WTC11 (cell line): ENCODE measurements at regions of chr2 and their contacts with region 1.

Region 1: GRCh38 chr2:71000780-71001591 is 6.3 kb upstream of the TEX261 start:
- DNase-seq: peak; percentile 77
- ATAC-seq: peak; percentile 72
- H3K4me3 Mint-ChIP-seq: peak overlapping the region; percentile 43
- H3K27ac Mint-ChIP-seq: no peak overlapping the region
- H3K4me1 Mint-ChIP-seq: peaks cover 18% of the 10 kb centered on the region
- H3K27me3 Mint-ChIP-seq: peaks cover 45% of the 10 kb centered on the region
- CTCF ChIP-seq: peak; percentile 87

Region 2: DNA sequence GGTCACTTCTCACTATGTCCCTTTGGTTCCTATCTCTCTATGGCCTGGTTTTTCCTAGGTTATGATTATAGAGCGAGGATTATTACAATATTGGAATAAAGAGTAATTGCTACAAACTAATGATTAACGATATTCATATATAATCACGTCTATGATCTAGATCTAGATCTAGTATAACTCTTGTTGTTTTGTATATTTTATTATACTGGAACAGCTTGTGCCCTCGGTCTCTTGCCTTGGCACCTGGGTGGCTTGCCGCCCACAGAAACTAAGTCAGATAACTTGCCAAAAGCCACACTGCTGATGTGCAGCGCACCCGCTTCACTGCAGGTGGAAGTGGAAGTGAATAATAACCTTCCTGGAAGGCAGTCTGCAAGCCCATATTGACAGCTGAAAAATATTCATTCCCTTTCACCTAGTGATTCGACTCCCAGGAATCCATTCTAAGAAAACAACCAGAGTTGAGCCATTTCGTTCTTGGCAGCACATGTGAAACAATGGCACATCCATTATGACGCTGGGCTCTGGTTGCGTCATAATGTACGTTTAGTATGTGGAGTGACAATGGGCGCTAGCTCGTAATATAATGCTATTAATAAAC is 23.3 kb before region 1 on chr2:
- CTCF ChIA-PET with region 1: interaction called, 68 read pairs
- POLR2A ChIA-PET with region 1: no interaction called
- DNase-seq: no peak
- ATAC-seq: no peak
- H3K4me3 Mint-ChIP-seq: peak overlapping the region; percentile 82
- H3K27ac Mint-ChIP-seq: no peak overlapping the region
- H3K4me1 Mint-ChIP-seq: peaks cover 18% of the 10 kb centered on the region
- H3K27me3 Mint-ChIP-seq: peaks cover 50% of the 10 kb centered on the region
- CTCF ChIP-seq: peak; percentile 3; the same call in 1 of the 2 replicates

Region 3: DNA sequence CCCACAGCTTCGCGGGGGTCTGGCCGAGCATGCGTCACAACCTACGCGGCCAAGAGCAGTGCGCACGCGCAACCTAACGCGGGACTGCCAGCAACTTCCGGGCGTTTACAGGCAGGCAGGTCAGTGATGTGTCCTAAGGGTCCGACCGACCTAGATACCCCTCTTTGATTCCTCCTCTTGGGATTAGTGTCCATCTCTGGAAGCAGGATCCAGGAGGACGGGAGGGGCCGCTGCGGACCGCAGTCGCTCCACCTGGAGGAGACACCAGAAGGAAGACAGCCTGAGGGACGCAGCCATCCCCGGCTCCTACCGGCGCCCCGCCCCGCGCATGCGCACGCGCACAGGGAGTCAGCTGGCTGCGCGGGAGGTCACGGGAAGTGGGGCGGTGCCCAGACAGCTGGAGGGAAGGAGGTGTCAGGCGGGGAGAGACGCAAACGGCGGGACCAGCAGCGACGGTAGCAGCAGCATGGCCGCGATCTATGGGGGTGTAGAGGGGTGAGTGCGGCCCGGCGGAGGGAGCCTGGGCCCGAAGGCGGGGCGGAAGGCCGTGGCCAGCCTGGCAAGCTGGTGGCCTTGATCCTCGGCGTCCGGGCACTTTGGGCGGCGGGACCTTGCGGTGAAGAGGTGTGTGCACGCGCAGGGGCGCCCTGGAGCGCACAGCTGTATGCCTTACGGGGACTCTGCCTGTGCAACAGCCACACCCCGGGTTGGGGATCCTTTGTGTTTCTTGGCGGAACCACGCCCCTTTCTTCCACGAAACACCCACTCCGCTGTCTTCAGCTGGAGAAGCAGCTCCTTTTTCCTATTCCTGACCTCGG is 67.4 kb after region 1 on chr2 and contains the start of gene NAGK:
- CTCF ChIA-PET with region 1: interaction called, 55 read pairs
- POLR2A ChIA-PET with region 1: interaction called, 5 read pairs
- DNase-seq: peak; percentile 96
- ATAC-seq: peak; percentile 83
- H3K4me3 Mint-ChIP-seq: peak within 1 kb of the TSS; percentile 97
- H3K27ac Mint-ChIP-seq: peak within 1 kb of the TSS; percentile 98
- H3K4me1 Mint-ChIP-seq: peaks cover 32% of the 10 kb centered on the region
- H3K27me3 Mint-ChIP-seq: peaks cover 2% of the 10 kb centered on the region; the same call in 1 of the 2 replicates
- CTCF ChIP-seq: no peak
- total RNA-seq, gene NAGK: 56.1 to 58.9 TPM (median 57.7 TPM) in 3 replicates

Region 4: GRCh38 chr2:71100195-71100964 is 99.4 kb after region 1 on chr2:
- CTCF ChIA-PET with region 1: interaction called, 13 read pairs
- POLR2A ChIA-PET with region 1: no interaction called
- DNase-seq: peak; percentile 72
- ATAC-seq: peak; percentile 63
- H3K4me3 Mint-ChIP-seq: no peak overlapping the region
- H3K27ac Mint-ChIP-seq: no peak overlapping the region
- H3K4me1 Mint-ChIP-seq: peaks cover 29% of the 10 kb centered on the region
- H3K27me3 Mint-ChIP-seq: no peaks in the 10 kb centered on the region
- CTCF ChIP-seq: peak; percentile 59

Region 5: GRCh38 chr2:71130113-71130904 is 129.3 kb after region 1 on chr2 and contains the starts of genes MCEE and MPHOSPH10:
- CTCF ChIA-PET with region 1: interaction called, 11 read pairs
- POLR2A ChIA-PET with region 1: interaction called, 3 read pairs
- DNase-seq: peak; percentile 92
- ATAC-seq: peak; percentile 94
- H3K4me3 Mint-ChIP-seq: no peak within 1 kb of the TSS
- H3K27ac Mint-ChIP-seq: peak within 1 kb of the TSS; percentile 98
- H3K4me1 Mint-ChIP-seq: peaks cover 9% of the 10 kb centered on the region
- H3K27me3 Mint-ChIP-seq: no peaks in the 10 kb centered on the region
- CTCF ChIP-seq: no peak
- total RNA-seq, gene MCEE: 17.2 to 19.1 TPM (median 18.7 TPM) in 3 replicates
- total RNA-seq, gene MPHOSPH10: 27.8 to 36.6 TPM (median 31.4 TPM) in 3 replicates